ENCODE measurements at regions of chr10 and their contacts with region 1.

Region 1: GRCh38 chr10:11611248-11612020 is at the start of gene USP6NL:
- DNase-seq: peak; percentile 82
- ATAC-seq: peak; percentile 72
- H3K4me3 Mint-ChIP-seq: peak within 1 kb of the TSS; percentile 95
- H3K27ac Mint-ChIP-seq: peak within 1 kb of the TSS; percentile 96
- H3K4me1 Mint-ChIP-seq: peaks cover 51% of the 10 kb centered on the region
- H3K27me3 Mint-ChIP-seq: no peaks in the 10 kb centered on the region
- CTCF ChIP-seq: no peak
- total RNA-seq, gene USP6NL: 59.9 and 64.5 TPM in 2 replicates

Region 2: DNA sequence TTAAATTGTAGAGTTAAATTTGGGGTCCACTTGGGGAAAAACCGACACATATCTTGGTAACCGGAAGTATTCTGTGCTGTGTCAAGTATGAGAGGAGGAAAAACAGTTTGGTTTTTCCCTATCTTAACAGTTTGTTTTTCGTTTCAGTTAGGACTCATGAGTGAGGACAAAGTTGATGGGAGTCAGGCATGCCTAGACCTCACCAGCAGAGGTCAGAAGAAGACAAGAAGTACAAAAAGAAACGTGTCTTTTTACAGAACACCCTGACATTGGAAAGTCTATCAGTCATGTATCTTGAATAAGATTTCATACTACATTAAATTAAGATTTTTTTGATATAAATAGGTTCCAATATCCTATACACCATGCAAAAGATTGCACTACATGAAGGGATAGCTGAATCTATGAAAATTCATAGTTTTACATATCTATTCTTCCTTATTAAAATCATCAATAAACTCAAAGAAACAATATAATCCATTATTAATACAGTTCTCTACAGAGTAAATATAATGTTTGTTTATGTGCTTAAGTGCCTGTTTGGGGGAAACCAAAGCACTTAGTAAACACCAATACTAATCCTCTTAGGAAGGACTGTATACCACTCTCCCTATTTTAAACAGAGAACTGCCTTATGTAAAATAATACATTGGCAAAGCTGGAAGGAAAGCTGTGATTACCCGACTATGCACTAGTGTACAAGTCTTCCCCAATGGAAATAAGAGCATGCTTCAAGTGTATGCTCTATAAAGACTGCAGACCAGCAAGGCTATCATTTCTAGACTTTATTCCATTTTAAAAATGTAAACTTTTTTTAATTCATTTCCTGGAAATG is 95.6 kb before region 1 on chr10:
- CTCF ChIA-PET with region 1: interaction called, 11 read pairs
- POLR2A ChIA-PET with region 1: interaction called, 9 read pairs
- intact Hi-C with region 1: loop called (anchors 1 kb)
- DNase-seq: no peak
- ATAC-seq: peak; percentile 72
- H3K4me3 Mint-ChIP-seq: peak overlapping the region; percentile 46
- H3K27ac Mint-ChIP-seq: peak overlapping the region; percentile 82
- H3K4me1 Mint-ChIP-seq: peaks cover 53% of the 10 kb centered on the region
- H3K27me3 Mint-ChIP-seq: no peaks in the 10 kb centered on the region
- CTCF ChIP-seq: peak; percentile 86

Region 3: DNA sequence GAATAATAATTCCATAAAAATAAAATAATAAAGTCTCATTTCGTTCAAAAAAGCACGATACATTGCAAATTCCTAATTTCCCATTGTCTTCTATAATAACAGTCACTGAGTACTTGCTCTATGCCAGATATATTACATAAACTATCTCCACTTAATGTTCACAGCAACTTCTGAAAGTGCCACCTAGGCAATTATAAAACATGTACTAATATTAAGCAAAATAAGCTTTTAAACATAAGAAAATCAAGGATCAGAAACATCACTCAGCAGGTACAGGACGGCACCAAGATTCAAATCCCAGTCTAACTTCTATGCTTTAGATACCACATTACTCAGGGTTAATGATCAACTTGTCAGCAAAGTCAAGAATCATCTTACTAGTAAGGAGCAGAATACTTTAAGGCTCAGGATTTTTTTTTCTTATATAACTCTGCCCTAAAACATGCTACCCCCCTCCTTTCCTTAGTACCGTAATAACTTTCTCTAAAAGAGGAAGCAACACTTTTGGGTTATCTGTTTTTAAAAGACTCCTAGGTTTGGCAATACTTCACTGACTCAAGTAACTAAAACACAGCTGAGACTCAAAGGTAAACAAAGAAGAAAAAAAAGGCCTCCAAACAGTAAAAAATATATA is 51.2 kb before region 1 on chr10:
- CTCF ChIA-PET with region 1: no interaction called
- POLR2A ChIA-PET with region 1: interaction called, 10 read pairs
- intact Hi-C with region 1: loop called (anchors 2 kb)
- DNase-seq: no peak
- ATAC-seq: peak; percentile 79
- H3K4me3 Mint-ChIP-seq: peak overlapping the region; percentile 64
- H3K27ac Mint-ChIP-seq: peak overlapping the region; percentile 88
- H3K4me1 Mint-ChIP-seq: peaks cover 91% of the 10 kb centered on the region
- H3K27me3 Mint-ChIP-seq: no peaks in the 10 kb centered on the region
- CTCF ChIP-seq: no peak

Region 4: GRCh38 chr10:11625019-11625735 is 13.7 kb after region 1 on chr10:
- CTCF ChIA-PET with region 1: interaction called, 3 read pairs
- POLR2A ChIA-PET with region 1: interaction called, 4 read pairs
- intact Hi-C with region 1: loop called (anchors 1 kb)
- DNase-seq: peak; percentile 50
- ATAC-seq: peak; percentile 91
- H3K4me3 Mint-ChIP-seq: peak overlapping the region; percentile 70
- H3K27ac Mint-ChIP-seq: peak overlapping the region; percentile 86
- H3K4me1 Mint-ChIP-seq: peaks cover 46% of the 10 kb centered on the region
- H3K27me3 Mint-ChIP-seq: no peaks in the 10 kb centered on the region
- CTCF ChIP-seq: no peak

Region 5: DNA sequence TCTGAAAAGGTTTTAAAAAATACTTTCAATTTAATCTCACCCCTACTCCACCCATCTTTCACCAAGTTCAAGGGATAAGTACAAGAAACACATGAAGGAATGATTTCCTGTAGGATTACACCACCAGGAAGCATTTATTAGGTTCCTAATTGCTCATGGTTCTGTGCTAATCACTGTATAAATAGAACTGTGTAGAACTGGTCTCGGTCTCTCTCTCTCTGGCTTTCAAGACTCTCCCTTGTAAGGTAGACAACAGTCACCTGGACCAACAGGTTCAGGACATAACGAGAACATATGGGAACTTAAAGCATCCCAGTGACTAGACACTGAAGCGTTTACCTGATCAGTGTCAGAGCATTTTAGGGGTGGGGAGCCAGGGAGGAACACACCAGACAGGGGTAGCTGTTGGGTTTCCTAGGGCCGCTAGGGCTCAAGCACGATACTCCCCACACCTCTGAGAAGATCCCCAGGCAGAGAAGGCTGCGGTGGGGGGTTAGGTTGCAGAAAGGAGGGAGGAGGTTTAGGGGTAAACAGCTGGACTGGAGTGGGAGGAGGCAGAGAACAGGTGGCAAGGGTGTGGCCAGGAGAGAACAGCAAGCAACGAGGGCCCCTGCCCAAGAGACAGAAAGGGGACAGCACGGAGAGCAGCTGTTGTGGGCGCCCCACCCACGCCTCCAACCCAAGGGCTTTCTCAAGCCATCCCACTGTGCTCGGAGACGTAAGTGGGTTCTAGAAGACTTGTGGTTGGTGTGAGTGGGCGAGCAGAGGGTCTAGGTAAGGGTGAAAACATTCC is 52.5 kb after region 1 on chr10:
- CTCF ChIA-PET with region 1: interaction called, 4 read pairs
- POLR2A ChIA-PET with region 1: interaction called, 19 read pairs
- intact Hi-C with region 1: loop called (anchors 1 kb)
- DNase-seq: peak; percentile 39
- ATAC-seq: peak; percentile 64
- H3K4me3 Mint-ChIP-seq: peak overlapping the region; percentile 73
- H3K27ac Mint-ChIP-seq: peak overlapping the region; percentile 96
- H3K4me1 Mint-ChIP-seq: peaks cover 87% of the 10 kb centered on the region
- H3K27me3 Mint-ChIP-seq: no peaks in the 10 kb centered on the region
- CTCF ChIP-seq: no peak

Region 6: GRCh38 chr10:11684717-11685645 is 73.5 kb after region 1 on chr10:
- CTCF ChIA-PET with region 1: interaction called, 5 read pairs
- POLR2A ChIA-PET with region 1: interaction called, 85 read pairs
- intact Hi-C with region 1: loop called (anchors 1 kb)
- DNase-seq: peak; percentile 69
- ATAC-seq: peak; percentile 76
- H3K4me3 Mint-ChIP-seq: peak overlapping the region; percentile 90
- H3K27ac Mint-ChIP-seq: peak overlapping the region; percentile 100
- H3K4me1 Mint-ChIP-seq: peaks cover 91% of the 10 kb centered on the region
- H3K27me3 Mint-ChIP-seq: no peaks in the 10 kb centered on the region
- CTCF ChIP-seq: no peak